ENCODE measurements at regions of chr20 and their contacts with region 1.

Region 1: GRCh38 chr20:2742934-2743559 is 50.5 kb downstream of the EBF4 start:
- DNase-seq: peak; percentile 59
- ATAC-seq: peak; percentile 90
- H3K4me3 ChIP-seq: no peak overlapping the region
- H3K27ac ChIP-seq: no peak overlapping the region
- H3K4me1 ChIP-seq: no peaks in the 10 kb centered on the region
- H3K27me3 ChIP-seq: peaks cover 26% of the 10 kb centered on the region
- CTCF ChIP-seq: peak; percentile 75
- POLR2A ChIP-seq: no peak
- RAD21 ChIP-seq: peak; percentile 58

Region 2: GRCh38 chr20:2246069-2246491 is 497.0 kb before region 1 on chr20:
- CTCF ChIA-PET with region 1: no interaction called
- POLR2A ChIA-PET with region 1: interaction called, 13 read pairs
- dilution Hi-C with region 1: no loop called
- in situ Hi-C with region 1: no loop called
- intact Hi-C with region 1: no loop called
- DNase-seq: no peak
- ATAC-seq: no peak
- H3K4me3 ChIP-seq: no peak overlapping the region
- H3K27ac ChIP-seq: no peak overlapping the region
- H3K4me1 ChIP-seq: no peaks in the 10 kb centered on the region
- H3K27me3 ChIP-seq: peaks cover 18% of the 10 kb centered on the region
- CTCF ChIP-seq: no peak
- POLR2A ChIP-seq: no peak
- RAD21 ChIP-seq: no peak

Region 3: DNA sequence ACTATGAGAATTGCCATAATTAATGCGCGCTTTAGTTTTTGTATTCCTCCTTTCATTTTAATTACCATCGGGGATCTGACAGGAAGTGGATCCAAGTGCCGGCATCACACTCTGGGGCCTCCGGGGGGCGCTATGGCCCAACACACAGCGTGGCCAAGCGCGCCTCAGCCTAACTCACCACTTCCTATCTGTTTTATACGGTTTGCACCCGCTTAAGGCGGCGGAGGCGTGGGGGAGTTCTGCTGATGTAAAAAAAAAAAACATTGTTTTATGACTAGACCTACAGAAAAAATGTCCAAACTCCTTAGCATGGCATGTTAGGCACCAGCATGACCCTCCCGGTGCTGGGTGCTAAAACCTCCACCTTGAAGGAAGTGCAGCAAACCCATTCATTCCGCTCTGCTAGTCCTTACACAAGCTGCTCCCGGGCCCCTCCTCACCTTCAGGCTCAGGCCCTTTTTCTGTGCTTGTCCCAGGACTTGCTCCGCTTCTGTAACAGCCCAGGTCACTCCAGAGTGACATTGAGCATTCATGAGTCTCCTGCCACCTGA is 54.9 kb before region 1 on chr20:
- CTCF ChIA-PET with region 1: no interaction called
- POLR2A ChIA-PET with region 1: no interaction called
- dilution Hi-C with region 1: no loop called
- in situ Hi-C with region 1: no loop called
- intact Hi-C with region 1: loop called (anchors 1 kb)
- DNase-seq: peak; percentile 29
- ATAC-seq: peak; percentile 47; the same call in 1 of the 2 replicates
- H3K4me3 ChIP-seq: no peak overlapping the region
- H3K27ac ChIP-seq: no peak overlapping the region
- H3K4me1 ChIP-seq: no peaks in the 10 kb centered on the region
- H3K27me3 ChIP-seq: peaks cover 39% of the 10 kb centered on the region
- CTCF ChIP-seq: peak; percentile 68
- POLR2A ChIP-seq: no peak
- RAD21 ChIP-seq: peak; percentile 77

Region 4: GRCh38 chr20:2694001-2694471 is 49.0 kb before region 1 on chr20:
- CTCF ChIA-PET with region 1: no interaction called
- POLR2A ChIA-PET with region 1: no interaction called
- dilution Hi-C with region 1: no loop called
- in situ Hi-C with region 1: no loop called
- intact Hi-C with region 1: loop called (anchors 2 kb)
- DNase-seq: no peak
- ATAC-seq: no peak
- H3K4me3 ChIP-seq: no peak overlapping the region
- H3K27ac ChIP-seq: no peak overlapping the region
- H3K4me1 ChIP-seq: no peaks in the 10 kb centered on the region
- H3K27me3 ChIP-seq: peaks cover 61% of the 10 kb centered on the region
- CTCF ChIP-seq: no peak
- POLR2A ChIP-seq: no peak
- RAD21 ChIP-seq: no peak

Region 5: GRCh38 chr20:3358676-3359340 is 615.8 kb after region 1 on chr20:
- CTCF ChIA-PET with region 1: no interaction called
- POLR2A ChIA-PET with region 1: no interaction called
- dilution Hi-C with region 1: no loop called
- in situ Hi-C with region 1: no loop called
- intact Hi-C with region 1: no loop called
- DNase-seq: no peak
- ATAC-seq: no peak
- H3K4me3 ChIP-seq: no peak overlapping the region
- H3K27ac ChIP-seq: no peak overlapping the region
- H3K4me1 ChIP-seq: no peaks in the 10 kb centered on the region
- H3K27me3 ChIP-seq: no peaks in the 10 kb centered on the region
- CTCF ChIP-seq: no peak
- POLR2A ChIP-seq: no peak
- RAD21 ChIP-seq: no peak